Activated CD4-positive, alpha-beta T cell treated with anti-CD3 and anti-CD28 coated beads, Interleukin-2, amount 10 ng/mL, durations not matched to agents 24 days and 14 days (primary cell): ENCODE measurements at regions of chr11 and their contacts with region 1.

Region 1: GRCh38 chr11:111378861-111379601 is at the start of gene POU2AF1:
- DNase-seq: peak; percentile 92
- H3K4me3 Mint-ChIP-seq: peak within 1 kb of the TSS; percentile 93
- H3K27ac Mint-ChIP-seq: peak within 1 kb of the TSS; percentile 99
- H3K4me1 Mint-ChIP-seq: peaks cover 61% of the 10 kb centered on the region
- H3K27me3 Mint-ChIP-seq: no peaks in the 10 kb centered on the region
- total RNA-seq, gene POU2AF1: 65.6 and 68.9 TPM in 2 replicates

Region 2: GRCh38 chr11:110453684-110454354 is 925.2 kb before region 1 on chr11:
- intact Hi-C with region 1: loop called (anchors 5 kb)
- DNase-seq: no peak
- H3K4me3 Mint-ChIP-seq: peak overlapping the region; percentile 47
- H3K27ac Mint-ChIP-seq: peak overlapping the region; percentile 43
- H3K4me1 Mint-ChIP-seq: peaks cover 39% of the 10 kb centered on the region
- H3K27me3 Mint-ChIP-seq: no peaks in the 10 kb centered on the region

Region 3: DNA sequence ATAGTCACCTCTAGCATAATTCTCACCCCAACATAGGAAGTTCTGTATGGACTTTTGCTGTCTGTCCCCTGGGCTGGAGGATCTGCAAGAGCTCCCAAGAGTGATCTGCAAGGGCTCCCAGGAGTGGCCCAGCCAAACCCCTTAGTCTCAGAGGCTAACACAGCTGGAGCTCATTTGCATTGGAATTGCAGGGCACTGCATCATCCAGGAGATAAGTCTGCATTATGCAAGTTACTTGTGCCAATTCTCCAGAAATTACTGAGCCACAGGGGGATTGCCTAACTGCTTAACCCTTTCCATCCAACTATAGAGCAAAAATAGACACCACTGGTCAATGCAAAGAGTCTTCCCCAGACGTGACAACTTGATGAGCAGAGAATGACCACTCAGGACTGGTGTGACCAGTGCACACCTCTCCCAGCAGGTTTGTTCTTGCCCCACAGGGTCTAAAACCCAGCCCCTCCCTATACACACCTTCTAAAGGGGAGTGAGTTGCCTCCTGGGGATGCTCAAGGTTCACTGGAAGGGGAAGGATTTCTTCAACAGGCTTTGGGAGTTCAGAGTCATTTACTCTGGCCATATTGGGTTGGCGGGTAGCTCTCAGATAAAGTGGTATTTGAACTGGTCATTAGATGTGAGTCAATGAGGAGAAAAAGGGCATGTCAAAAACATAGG is 42.3 kb before region 1 on chr11:
- intact Hi-C with region 1: no loop called
- DNase-seq: no peak
- H3K4me3 Mint-ChIP-seq: no peak overlapping the region
- H3K27ac Mint-ChIP-seq: no peak overlapping the region
- H3K4me1 Mint-ChIP-seq: no peaks in the 10 kb centered on the region
- H3K27me3 Mint-ChIP-seq: peaks cover 8% of the 10 kb centered on the region

Region 4: DNA sequence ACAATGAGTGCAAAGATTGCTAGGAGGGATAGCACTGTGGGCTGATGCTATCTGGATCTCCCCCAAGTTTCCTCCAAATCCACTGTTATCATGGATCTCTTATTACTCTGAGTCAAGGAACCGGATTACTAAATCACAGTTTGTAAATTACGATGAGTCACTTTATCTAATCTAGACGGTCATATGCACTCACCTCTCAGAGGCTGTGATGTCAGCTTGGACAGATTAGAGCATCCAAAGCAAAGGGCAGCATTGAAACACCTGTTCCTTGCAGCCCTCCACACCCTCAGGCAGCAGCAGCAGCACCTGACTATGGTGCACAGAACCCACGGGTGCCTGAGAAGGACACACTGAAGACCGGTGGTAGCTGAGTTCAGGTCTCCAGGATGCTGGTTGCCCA is 14.1 kb after region 1 on chr11:
- intact Hi-C with region 1: loop called (anchors 2 kb)
- DNase-seq: no peak
- H3K4me3 Mint-ChIP-seq: no peak overlapping the region
- H3K27ac Mint-ChIP-seq: no peak overlapping the region
- H3K4me1 Mint-ChIP-seq: peaks cover 13% of the 10 kb centered on the region
- H3K27me3 Mint-ChIP-seq: no peaks in the 10 kb centered on the region

Region 5: DNA sequence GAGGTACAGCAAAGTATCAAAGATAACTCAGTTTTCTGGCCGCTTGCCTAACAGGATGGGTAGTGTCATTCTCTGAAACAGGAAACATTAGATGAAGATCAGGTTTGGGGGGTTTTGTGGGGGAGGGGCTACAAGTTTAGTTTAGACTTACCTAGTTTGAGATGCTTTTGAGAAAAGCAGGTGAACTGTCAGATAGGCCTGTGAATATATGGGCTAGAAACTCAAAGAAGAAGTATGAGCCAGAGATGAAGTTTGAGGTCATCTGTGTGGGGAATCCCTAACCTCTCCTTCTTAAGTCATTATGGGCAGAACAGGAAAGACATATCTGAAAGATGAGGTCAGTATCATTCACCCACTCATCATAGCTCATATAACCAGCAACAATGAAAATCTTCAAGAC is 147.5 kb after region 1 on chr11:
- intact Hi-C with region 1: loop called (anchors 2 kb)
- DNase-seq: no peak
- H3K4me3 Mint-ChIP-seq: peak overlapping the region; percentile 30
- H3K27ac Mint-ChIP-seq: peak overlapping the region; percentile 59
- H3K4me1 Mint-ChIP-seq: peaks cover 40% of the 10 kb centered on the region
- H3K27me3 Mint-ChIP-seq: no peaks in the 10 kb centered on the region

Region 6: DNA sequence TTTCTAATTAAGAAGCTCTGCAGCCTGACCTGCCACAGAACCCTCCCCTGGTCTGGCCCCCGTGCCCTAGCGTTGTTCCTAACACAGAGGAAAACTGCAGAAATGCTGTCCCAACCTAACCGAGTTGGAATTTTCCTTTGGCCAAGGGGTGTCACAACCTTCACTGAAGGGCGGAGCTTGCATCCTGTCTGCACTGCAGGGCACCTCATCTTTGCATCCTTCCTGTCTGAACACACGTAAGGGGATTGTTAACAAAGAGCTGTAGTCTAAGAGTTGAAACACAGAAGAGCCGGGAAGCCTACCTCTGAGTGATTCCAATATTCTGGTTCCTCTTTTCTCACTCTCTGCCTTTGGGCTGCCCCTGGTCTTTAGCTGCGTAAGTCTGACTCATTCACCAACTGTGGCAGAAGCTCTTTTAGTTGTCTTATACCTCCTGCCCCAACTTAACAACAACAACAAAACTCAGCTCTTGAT is 559.7 kb after region 1 on chr11:
- intact Hi-C with region 1: loop called (anchors 5 kb)
- DNase-seq: peak; percentile 81
- H3K4me3 Mint-ChIP-seq: peak overlapping the region; percentile 91
- H3K27ac Mint-ChIP-seq: peak overlapping the region; percentile 95
- H3K4me1 Mint-ChIP-seq: peaks cover 50% of the 10 kb centered on the region
- H3K27me3 Mint-ChIP-seq: no peaks in the 10 kb centered on the region